Stomach (tissue), 19 donors: ENCODE measurements at regions of chr7 and their contacts with region 1.

Region 1: DNA sequence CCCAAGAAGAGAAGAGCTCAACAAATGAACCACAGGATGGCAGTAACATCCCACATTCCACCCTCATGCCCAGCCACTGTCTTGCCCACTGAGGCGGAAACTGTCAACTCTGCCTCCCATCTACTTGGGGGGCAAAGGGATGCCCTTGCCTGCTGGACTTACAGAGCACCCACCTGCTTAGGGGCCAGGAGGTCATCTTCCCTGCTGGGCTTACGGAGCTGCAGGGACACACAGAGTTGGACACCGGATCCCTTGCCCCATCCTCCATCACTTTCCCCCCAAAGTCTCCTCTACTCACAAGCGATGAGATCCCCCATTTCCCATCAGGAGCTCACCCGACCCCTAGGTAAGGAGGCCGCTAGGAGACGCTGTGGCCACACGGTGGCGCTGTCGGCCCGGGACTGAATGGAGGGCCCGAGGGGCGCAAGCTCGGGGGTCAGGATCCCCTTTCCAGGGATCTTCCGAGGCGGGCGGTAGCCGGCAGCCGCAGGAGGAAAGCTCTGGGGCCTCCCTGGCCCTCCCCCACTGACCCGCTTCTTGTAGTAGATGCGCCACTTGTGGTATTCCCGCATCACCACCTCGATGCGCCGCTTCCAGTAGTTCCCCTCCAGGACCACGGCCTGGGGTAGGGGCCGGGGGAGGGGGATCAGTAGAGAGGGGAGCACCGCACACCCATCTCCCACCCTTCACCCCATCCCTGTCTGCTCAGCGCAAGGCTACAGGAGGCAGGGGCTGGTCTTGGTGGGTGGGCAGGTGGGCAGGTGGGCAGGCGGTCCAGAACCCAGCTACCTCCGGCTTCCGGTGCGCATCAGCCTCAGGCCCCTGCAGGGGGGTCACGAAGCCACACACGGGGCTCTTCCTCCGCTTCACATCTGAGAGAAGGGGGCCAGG is 17.3 kb downstream of the MLXIPL start:
- DNase-seq: peak; percentile 59 to 78
- H3K4me3 ChIP-seq: peak overlapping the region in 1 of 4 donors; percentile 22
- H3K27ac ChIP-seq: no peak overlapping the region
- H3K4me1 ChIP-seq: peaks cover 0 to 9% (median 6%) of the 10 kb centered on the region in 4 donors
- H3K27me3 ChIP-seq: peaks cover 0 to 59% (median 39%) of the 10 kb centered on the region in 3 donors
- CTCF ChIP-seq: peak in 5 of 7 experiments; percentile 80 to 93 (median 86)
- EP300 ChIP-seq: no peak
- POLR2A ChIP-seq: no peak

Region 2: GRCh38 chr7:73358590-73359275 is 248.3 kb before region 1 on chr7:
- intact Hi-C with region 1: no loop called
- DNase-seq: no peak
- H3K4me3 ChIP-seq: peak overlapping the region; percentile 17 to 39 (median 24)
- H3K27ac ChIP-seq: peak overlapping the region in 4 of 5 donors; percentile 42 to 57 (median 52)
- H3K4me1 ChIP-seq: peaks cover 5 to 18% (median 16%) of the 10 kb centered on the region in 4 donors
- H3K27me3 ChIP-seq: peaks cover 0 to 18% (median 0%) of the 10 kb centered on the region in 3 donors
- CTCF ChIP-seq: no peak
- EP300 ChIP-seq: no peak
- POLR2A ChIP-seq: no peak

Region 3: GRCh38 chr7:73515178-73515577 is 91.9 kb before region 1 on chr7:
- intact Hi-C with region 1: no loop called
- DNase-seq: no peak
- H3K4me3 ChIP-seq: no peak overlapping the region
- H3K27ac ChIP-seq: no peak overlapping the region
- H3K4me1 ChIP-seq: peaks cover 18 to 74% (median 43%) of the 10 kb centered on the region in 4 donors
- H3K27me3 ChIP-seq: no peaks in the 10 kb centered on the region
- CTCF ChIP-seq: no peak
- EP300 ChIP-seq: no peak
- POLR2A ChIP-seq: no peak

Region 4: GRCh38 chr7:73721377-73721817 is 114.4 kb after region 1 on chr7:
- intact Hi-C with region 1: loop called (anchors 5 kb)
- DNase-seq: peak; percentile 56 to 90
- H3K4me3 ChIP-seq: no peak overlapping the region
- H3K27ac ChIP-seq: peak overlapping the region in 2 of 5 donors; percentile 16 to 49
- H3K4me1 ChIP-seq: peaks cover 36 to 55% (median 43%) of the 10 kb centered on the region in 4 donors
- H3K27me3 ChIP-seq: peaks cover 0 to 9% (median 6%) of the 10 kb centered on the region in 3 donors
- CTCF ChIP-seq: no peak
- EP300 ChIP-seq: no peak
- POLR2A ChIP-seq: no peak